Right ventricle myocardium inferior (tissue), 1 donor: ENCODE measurements at regions of chr4 and their contacts with region 1.

Region 1: DNA sequence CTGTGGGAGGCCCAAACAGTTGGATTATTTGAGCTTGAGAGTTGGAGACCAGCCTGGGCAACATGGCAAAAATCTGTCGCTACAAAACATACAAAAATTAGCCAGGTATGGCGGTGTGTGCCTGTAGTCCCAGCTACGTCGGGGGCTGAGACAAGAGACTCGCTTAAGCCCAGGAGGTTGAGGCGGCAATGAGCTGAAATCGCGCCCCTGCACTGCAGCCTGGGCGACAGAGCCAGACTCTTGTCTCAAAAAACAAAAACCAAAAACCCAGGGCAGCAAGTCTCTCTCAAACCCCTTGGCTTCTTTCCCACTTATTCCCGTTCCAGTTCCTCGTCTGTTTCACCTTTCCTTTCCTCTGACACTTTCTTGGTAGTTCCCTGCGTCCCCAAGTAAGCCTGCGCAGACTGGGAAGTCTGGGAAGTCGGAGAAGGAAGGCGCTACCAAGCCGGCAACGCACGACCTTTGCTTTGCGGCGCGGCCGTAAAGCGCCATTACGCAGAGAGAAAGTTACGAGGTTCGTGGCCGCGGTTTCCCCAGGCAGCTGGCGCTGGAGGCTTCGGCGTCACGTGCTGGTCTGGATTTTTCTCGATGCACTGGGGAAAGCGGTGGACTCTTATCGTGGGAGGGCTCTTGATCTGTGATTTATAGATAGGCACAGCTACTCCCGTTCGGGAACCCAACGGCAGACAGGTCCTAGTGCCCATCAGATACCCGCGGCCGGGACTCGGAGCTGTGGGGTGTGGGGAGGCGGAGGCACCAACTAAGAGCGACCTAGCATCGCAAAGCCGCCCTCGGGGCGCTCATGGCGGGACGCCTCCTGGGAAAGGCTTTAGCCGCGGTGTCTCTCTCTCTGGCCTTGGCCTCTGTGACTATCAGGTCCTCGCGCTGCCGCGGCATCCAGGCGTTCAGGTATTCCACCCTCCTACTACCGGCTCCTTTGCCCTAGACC is at the start of gene NUDT9:
- DNase-seq: peak; percentile 99
- ATAC-seq: peak; percentile 96
- total RNA-seq, gene NUDT9: 30.2 TPM

Region 2: DNA sequence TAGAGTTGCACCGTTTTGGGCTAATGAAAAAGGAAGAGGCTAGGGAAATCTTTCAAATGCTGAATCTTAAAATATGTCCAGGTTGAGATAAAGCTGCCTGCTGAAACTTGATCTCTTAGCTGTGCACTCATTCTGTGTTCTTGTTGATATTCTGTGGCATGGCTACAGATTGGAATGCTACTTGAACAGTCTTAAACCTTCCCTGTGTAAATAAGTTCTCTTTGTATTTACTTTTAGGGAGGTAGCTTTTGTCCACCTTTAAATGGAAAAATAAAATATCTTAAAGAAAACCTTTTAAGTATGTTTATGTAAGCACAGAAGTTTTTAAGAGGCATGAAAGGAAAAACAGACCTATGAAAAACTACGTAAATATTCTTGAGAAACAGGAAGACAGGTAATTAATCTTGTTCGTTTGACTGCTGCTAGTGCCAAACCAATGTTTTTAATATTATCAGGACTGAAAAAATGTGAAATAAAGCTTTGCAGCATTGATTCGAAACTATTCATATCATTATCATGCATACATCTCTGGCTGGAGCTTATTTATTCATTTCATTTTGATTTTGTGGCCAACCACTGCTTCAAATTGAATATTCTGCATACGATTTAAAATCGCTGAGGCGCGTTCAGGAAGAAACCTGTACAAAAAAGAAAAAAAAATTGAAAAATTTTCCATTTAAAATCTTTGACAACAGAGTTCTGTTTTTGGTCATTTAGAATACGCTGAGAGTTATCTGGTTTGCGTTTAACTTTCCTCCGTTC is 117.5 kb before region 1 on chr4:
- intact Hi-C with region 1: no loop called
- DNase-seq: no peak
- ATAC-seq: no peak

Region 3: GRCh38 chr4:87390891-87391575 is 31.3 kb before region 1 on chr4 and contains the start of gene HSD17B11:
- intact Hi-C with region 1: loop called (anchors 1 kb)
- DNase-seq: peak; percentile 95
- ATAC-seq: peak; percentile 100
- total RNA-seq, gene HSD17B11: 13.6 TPM

Region 4: DNA sequence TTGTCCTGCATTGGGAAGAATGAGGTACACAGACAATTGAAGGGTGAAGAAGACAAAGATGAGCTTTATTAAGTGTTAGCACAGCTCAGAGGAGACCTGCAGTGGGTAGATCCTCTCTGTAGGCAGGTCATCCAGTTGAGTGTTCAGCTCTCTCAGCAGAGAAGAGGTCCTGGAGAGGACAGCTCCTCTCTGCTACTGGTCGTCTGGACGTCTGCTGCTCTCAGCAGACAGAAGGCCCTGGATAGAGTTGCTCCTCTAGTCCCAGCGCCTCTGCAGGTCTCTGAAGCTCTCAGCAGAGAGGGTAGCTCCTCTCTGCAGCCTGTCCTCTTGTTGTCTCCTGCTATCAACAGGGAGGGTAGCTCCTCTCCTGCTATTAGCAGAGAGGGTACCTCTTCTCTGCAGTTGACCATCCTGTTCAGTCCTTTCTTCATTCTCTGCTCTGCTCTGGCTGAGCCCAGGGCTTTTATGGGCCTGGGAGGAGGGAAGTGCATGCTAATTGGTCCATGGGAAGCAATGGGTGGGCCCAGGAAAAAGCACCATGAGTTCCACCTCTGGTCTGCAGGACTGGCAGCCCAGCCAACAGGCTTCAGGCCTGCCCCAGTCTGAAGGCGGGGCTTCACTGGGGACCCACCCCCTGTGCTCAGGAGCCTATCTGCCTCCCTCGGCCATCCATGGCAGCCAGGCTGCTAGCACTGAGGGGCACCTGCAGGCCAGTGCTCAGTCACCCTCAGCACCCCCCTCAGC is 322.9 kb after region 1 on chr4:
- intact Hi-C with region 1: no loop called
- DNase-seq: no peak
- ATAC-seq: no peak

Region 5: DNA sequence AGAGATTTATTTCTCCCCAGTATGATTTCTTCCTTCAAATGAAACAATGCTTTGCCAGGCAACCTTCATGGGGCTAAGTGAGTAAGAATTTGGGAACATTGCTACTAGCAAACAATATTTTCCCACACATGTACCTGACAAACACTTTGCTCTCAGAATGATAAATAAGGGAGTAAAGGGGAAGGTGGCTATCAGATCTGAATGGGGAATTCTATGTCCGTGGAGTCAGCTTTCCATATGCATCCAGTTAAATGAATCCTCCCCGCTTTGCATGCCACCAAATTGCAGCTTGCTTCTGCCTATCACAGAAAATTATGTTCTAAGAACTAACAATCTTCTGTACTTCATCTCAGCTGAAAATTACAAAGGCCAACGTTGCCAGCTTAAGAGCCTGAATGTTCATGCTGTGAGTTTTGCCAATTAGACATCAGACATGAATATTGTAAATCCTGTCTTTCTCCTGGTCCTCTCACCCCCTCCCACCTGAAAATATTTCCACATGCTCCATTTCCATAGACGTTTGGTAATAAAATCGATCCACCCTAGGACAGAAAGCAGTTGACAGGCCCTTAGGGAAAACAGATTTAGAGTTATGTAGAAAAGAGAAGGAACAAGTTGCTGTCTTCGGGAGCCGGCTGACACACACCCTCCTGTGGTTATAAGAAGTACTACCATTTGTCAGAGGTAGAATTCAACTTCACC is 416.7 kb after region 1 on chr4:
- intact Hi-C with region 1: no loop called
- DNase-seq: peak; percentile 73
- ATAC-seq: peak; percentile 56